ENCODE measurements at regions of chr17 and their contacts with region 1.

Region 1: GRCh38 chr17:57855391-57856035 is 5.7 kb upstream of the MRPS23 start:
- DNase-seq: no peak
- ATAC-seq: no peak
- H3K4me3 ChIP-seq: no peak overlapping the region
- H3K4me1 ChIP-seq: peaks cover 24% of the 10 kb centered on the region
- CTCF ChIP-seq: no peak

Region 2: GRCh38 chr17:57995076-57995956 is 139.8 kb after region 1 on chr17:
- intact Hi-C with region 1: loop called (anchors 5 kb)
- DNase-seq: peak in 2 of 3 donors; percentile 41 to 70
- ATAC-seq: peak; percentile 94
- H3K4me3 ChIP-seq: no peak overlapping the region
- H3K4me1 ChIP-seq: no peaks in the 10 kb centered on the region
- CTCF ChIP-seq: peak; percentile 25